Mammary epithelial cell (primary cell): ENCODE measurements at regions of chr14 and their contacts with region 1.

Region 1: GRCh38 chr14:98906123-98906995 is 365.6 kb downstream of the BCL11B start:
- DNase-seq: peak; percentile 93
- H3K4me3 ChIP-seq: no peak overlapping the region
- H3K27ac ChIP-seq: peak overlapping the region; percentile 68
- H3K4me1 ChIP-seq: peaks cover 72% of the 10 kb centered on the region
- H3K27me3 ChIP-seq: no peaks in the 10 kb centered on the region
- CTCF ChIP-seq: no peak

Region 2: GRCh38 chr14:98501335-98501734 is 405.0 kb before region 1 on chr14:
- CTCF ChIA-PET with region 1: no interaction called
- dilution Hi-C with region 1: no loop called
- in situ Hi-C with region 1: no loop called
- intact Hi-C with region 1: loop called (anchors 10 kb)
- DNase-seq: peak; percentile 91
- H3K4me3 ChIP-seq: no peak overlapping the region
- H3K27ac ChIP-seq: peak overlapping the region; percentile 68
- H3K4me1 ChIP-seq: peaks cover 58% of the 10 kb centered on the region
- H3K27me3 ChIP-seq: no peaks in the 10 kb centered on the region
- CTCF ChIP-seq: no peak

Region 3: GRCh38 chr14:98953551-98954348 is 47.4 kb after region 1 on chr14:
- CTCF ChIA-PET with region 1: no interaction called
- dilution Hi-C with region 1: no loop called
- in situ Hi-C with region 1: no loop called
- intact Hi-C with region 1: loop called (anchors 2 kb)
- DNase-seq: peak; percentile 91
- H3K4me3 ChIP-seq: no peak overlapping the region
- H3K27ac ChIP-seq: no peak overlapping the region
- H3K4me1 ChIP-seq: peaks cover 39% of the 10 kb centered on the region
- H3K27me3 ChIP-seq: no peaks in the 10 kb centered on the region
- CTCF ChIP-seq: no peak

Region 4: GRCh38 chr14:99035712-99036610 is 129.6 kb after region 1 on chr14:
- CTCF ChIA-PET with region 1: no interaction called
- dilution Hi-C with region 1: no loop called
- in situ Hi-C with region 1: no loop called
- intact Hi-C with region 1: loop called (anchors 2 kb)
- DNase-seq: peak; percentile 96
- H3K4me3 ChIP-seq: peak overlapping the region in 2 of 3 experiments; percentile 4 to 10
- H3K27ac ChIP-seq: peak overlapping the region; percentile 63
- H3K4me1 ChIP-seq: peaks cover 19% of the 10 kb centered on the region
- H3K27me3 ChIP-seq: no peaks in the 10 kb centered on the region
- CTCF ChIP-seq: no peak

Region 5: DNA sequence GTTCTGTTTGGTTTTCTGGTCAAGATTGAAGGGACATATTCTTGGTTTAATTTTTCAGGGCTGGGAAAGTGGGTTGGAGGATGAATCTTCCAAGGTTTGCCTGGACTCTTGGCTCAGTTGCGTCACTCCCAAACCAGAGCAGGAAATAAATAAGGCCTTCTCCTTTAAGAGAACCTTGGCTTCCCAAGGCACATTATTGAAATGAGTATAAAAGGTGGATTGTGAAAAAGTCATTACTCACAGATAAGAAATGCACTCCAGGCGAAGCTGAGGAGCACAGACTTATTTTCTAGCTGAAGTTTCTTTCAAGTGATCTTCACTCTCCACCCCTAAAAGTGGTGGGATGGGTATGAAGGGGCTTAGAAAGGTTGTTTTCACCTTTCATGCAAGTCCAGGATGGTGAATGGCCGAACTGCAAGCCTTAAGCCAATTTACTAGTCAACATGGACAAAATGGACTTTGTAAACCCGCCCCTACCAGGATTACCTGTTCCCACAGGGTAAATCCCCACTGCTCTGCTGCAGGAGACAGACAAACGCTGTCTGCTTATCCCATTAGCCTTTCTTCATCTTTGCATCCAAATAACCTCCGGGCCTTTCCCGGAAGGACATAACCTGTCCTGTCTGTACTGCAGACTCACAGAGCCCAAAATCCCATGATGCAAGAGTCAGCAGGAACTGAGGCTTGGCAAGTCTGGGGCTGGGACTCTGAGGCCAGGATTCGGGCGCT is 158.0 kb after region 1 on chr14:
- CTCF ChIA-PET with region 1: no interaction called
- dilution Hi-C with region 1: no loop called
- in situ Hi-C with region 1: no loop called
- intact Hi-C with region 1: loop called (anchors 5 kb)
- DNase-seq: peak; percentile 89
- H3K4me3 ChIP-seq: no peak overlapping the region
- H3K27ac ChIP-seq: peak overlapping the region; percentile 76
- H3K4me1 ChIP-seq: peaks cover 36% of the 10 kb centered on the region
- H3K27me3 ChIP-seq: no peaks in the 10 kb centered on the region
- CTCF ChIP-seq: no peak